Right ventricle myocardium inferior (tissue), 1 donor: ENCODE measurements at regions of chr4 and their contacts with region 1.

Region 1: DNA sequence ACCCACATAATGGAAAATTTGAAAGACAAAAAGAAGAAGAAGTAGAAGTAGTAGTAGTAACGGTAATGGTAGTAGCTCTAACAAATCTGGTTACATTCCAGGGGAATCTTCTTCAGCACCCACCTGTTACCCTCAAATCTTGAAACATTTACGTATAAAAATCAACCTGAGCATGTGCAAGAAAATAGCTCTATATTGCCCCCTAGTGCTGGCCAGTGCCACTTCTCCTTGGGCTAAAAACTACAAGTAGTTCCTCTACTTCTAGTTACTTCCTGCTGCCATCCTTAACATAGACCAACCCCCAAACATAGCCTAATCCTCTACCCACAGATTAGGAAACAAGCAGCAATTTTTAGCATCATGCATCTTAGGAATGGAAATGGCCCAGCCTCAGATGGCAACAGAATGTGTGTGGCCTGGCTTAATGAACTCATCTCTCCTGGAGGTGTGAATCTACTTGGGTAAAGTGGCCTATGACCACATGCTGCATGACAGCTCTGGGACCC is 3.1 kb downstream of the PDGFC start:
- DNase-seq: no peak
- ATAC-seq: peak; percentile 43

Region 2: DNA sequence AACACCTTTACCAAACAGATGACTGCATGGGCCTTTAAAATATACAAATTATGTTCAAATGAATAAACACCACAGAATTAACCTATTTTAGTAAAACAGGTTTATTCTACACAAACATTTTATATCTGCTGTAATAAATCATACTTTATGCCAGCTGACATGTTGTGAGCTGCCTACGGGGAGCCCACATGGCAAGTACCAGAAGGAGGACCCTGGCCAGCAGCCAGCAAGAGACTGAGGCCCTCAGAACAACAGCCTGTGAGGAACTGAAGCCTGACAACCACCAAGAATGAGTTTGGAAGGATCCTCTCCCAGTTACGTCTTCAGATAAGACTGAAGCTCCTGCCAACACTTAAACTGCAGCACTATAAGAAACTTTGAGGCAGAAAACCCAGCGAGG is 373.9 kb before region 1 on chr4:
- intact Hi-C with region 1: loop called (anchors 10 kb)
- DNase-seq: peak; percentile 68
- ATAC-seq: no peak

Region 3: GRCh38 chr4:156838761-156839160 is 129.8 kb before region 1 on chr4:
- intact Hi-C with region 1: loop called (anchors 5 kb)
- DNase-seq: no peak
- ATAC-seq: no peak

Region 4: GRCh38 chr4:157045507-157046127 is 77.1 kb after region 1 on chr4:
- intact Hi-C with region 1: loop called (anchors 5 kb)
- DNase-seq: no peak
- ATAC-seq: peak; percentile 62